ENCODE measurements at regions of chr20 and their contacts with region 1.

Region 1: DNA sequence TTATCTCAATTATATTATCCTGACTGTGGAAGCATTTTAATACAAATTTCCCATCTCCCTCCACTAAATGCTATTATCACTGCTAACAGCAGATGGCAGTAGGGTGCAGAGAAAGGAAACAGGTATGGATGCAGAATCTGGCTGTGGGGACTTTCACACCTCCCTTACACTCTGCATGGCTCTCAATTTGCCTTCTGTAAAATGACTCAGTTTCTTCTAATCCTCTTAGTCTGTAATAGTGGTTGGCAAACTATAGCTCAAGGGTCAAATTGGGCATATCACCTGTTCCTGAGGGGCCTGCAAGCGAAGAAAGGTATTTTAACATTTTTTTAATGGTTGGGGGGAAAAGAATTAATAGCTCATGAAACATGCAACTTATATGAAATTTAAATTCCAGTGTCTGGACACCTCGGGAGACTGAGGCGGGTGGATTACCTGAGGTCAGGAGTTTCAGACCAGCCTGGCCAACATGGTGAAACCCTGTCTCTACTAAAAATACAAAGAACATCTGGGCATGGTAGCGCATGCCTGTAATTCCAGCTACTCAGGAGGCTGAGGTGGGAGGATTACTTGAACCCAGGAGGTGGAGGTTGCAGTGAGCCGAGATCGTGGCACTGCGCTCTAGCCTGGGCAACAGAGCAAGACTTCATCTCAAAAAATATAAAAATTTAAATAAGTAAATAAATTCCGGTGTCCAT is 83.5 kb downstream of the ZMYND8 start:
- DNase-seq: peak; percentile 71
- ATAC-seq: peak; percentile 50
- H3K4me3 ChIP-seq: no peak overlapping the region
- H3K27ac ChIP-seq: peak overlapping the region; percentile 32; the same call in 1 of the 2 replicates
- H3K4me1 ChIP-seq: peaks cover 20% of the 10 kb centered on the region
- H3K27me3 ChIP-seq: no peaks in the 10 kb centered on the region
- CTCF ChIP-seq: peak; percentile 96
- POLR2A ChIP-seq: 0 out of 2 replicates have a peak, but pooled peaks have one; percentile 34
- RAD21 ChIP-seq: peak; percentile 96

Region 2: DNA sequence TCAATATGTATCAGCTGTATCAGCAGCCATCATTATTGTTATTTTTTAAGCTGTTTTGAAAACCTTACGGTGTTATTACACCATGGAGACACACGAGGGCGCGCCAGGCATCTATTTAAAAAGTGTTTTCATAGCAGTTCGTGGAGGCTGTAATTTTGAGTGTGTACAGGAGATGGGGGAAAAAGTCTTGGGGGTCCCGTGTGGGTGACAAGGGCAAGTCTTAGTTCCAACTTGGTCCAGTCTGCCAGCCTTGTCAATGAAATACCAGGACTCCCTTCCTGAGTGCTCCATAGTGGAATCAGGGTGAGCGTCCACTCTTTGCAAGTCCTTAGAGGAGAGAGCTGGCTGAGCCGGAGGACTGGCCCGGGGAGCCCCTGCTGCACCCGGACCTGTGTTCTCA is 520.3 kb before region 1 on chr20:
- CTCF ChIA-PET with region 1: no interaction called
- POLR2A ChIA-PET with region 1: no interaction called
- dilution Hi-C with region 1: no loop called
- in situ Hi-C with region 1: no loop called
- intact Hi-C with region 1: loop called (anchors 5 kb)
- DNase-seq: peak; percentile 62
- ATAC-seq: peak; percentile 85
- H3K4me3 ChIP-seq: no peak overlapping the region
- H3K27ac ChIP-seq: no peak overlapping the region
- H3K4me1 ChIP-seq: no peaks in the 10 kb centered on the region
- H3K27me3 ChIP-seq: no peaks in the 10 kb centered on the region
- CTCF ChIP-seq: peak; percentile 80
- POLR2A ChIP-seq: no peak
- RAD21 ChIP-seq: peak; percentile 75

Region 3: GRCh38 chr20:47196091-47197081 is 76.7 kb before region 1 on chr20:
- CTCF ChIA-PET with region 1: no interaction called
- POLR2A ChIA-PET with region 1: no interaction called
- dilution Hi-C with region 1: no loop called
- in situ Hi-C with region 1: no loop called
- intact Hi-C with region 1: loop called (anchors 1 kb)
- DNase-seq: peak; percentile 60
- ATAC-seq: peak; percentile 94
- H3K4me3 ChIP-seq: no peak overlapping the region
- H3K27ac ChIP-seq: no peak overlapping the region
- H3K4me1 ChIP-seq: peaks cover 3% of the 10 kb centered on the region; the same call in 1 of the 2 replicates
- H3K27me3 ChIP-seq: no peaks in the 10 kb centered on the region
- CTCF ChIP-seq: peak; percentile 96
- POLR2A ChIP-seq: peak; percentile 42; the same call in 1 of the 2 replicates
- RAD21 ChIP-seq: peak; percentile 96

Region 4: DNA sequence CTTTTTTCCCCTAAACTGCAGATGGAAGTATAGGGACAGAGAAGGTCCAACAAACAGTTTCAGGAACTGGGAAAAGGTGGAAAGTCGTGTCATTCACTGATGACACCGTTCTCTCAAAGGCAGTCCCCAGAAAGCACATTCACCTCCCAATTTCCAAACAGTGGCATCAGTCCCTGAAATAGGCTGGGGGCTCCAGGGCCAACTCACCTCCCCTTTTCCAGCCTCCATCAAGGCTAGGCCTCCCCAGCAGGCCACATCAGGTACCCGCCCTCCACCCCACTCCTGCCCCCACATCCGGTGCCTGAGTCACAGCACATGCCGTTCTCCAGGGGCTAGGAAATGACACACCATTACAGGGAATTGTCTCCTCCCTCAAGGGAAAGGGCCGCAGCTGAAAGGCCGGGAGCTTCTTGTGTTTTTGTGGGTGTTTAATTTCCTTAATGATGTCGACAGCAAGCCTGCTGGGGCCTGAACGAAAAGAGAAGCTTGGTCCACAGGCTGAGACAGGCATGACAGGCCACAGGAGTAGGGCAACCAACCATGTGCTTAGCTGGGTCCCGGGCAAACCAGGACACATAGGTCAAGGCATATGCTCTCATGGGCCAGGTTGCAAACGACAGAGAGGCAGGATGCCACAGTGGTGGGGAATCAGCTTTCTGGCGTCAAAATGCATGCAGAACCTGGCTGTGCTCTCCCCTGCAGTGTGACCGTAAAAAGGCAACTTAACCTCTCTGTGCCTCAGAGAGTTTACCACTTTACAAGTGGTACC is 44.3 kb after region 1 on chr20:
- CTCF ChIA-PET with region 1: interaction called, 4 read pairs
- POLR2A ChIA-PET with region 1: no interaction called
- dilution Hi-C with region 1: no loop called
- in situ Hi-C with region 1: no loop called
- intact Hi-C with region 1: loop called (anchors 5 kb)
- DNase-seq: peak; percentile 98
- ATAC-seq: peak; percentile 63
- H3K4me3 ChIP-seq: no peak overlapping the region
- H3K27ac ChIP-seq: peak overlapping the region; percentile 95
- H3K4me1 ChIP-seq: peaks cover 46% of the 10 kb centered on the region
- H3K27me3 ChIP-seq: no peaks in the 10 kb centered on the region
- CTCF ChIP-seq: no peak
- POLR2A ChIP-seq: peak; percentile 78; the same call in 1 of the 2 replicates
- RAD21 ChIP-seq: peak; percentile 14; the same call in 1 of the 2 replicates

Region 5: GRCh38 chr20:47356526-47357295 is 83.7 kb after region 1 on chr20 and contains the start of gene ZMYND8:
- CTCF ChIA-PET with region 1: interaction called, 6 read pairs
- POLR2A ChIA-PET with region 1: interaction called, 9 read pairs
- dilution Hi-C with region 1: no loop called
- in situ Hi-C with region 1: no loop called
- intact Hi-C with region 1: loop called (anchors 2 kb)
- DNase-seq: peak; percentile 92
- ATAC-seq: peak; percentile 58
- H3K4me3 ChIP-seq: no peak within 1 kb of the TSS
- H3K27ac ChIP-seq: peak within 1 kb of the TSS; percentile 98
- H3K4me1 ChIP-seq: peaks cover 76% of the 10 kb centered on the region
- H3K27me3 ChIP-seq: no peaks in the 10 kb centered on the region
- CTCF ChIP-seq: no peak
- POLR2A ChIP-seq: 0 out of 2 replicates have a peak, but pooled peaks have one; percentile 12
- RAD21 ChIP-seq: no peak
- total RNA-seq, gene ZMYND8: 23.6 and 24.0 TPM in 2 replicates

Region 6: GRCh38 chr20:47392015-47392720 is 119.1 kb after region 1 on chr20:
- CTCF ChIA-PET with region 1: no interaction called
- POLR2A ChIA-PET with region 1: interaction called, 4 read pairs
- dilution Hi-C with region 1: loop called (anchors 25 kb)
- in situ Hi-C with region 1: no loop called
- intact Hi-C with region 1: no loop called
- DNase-seq: peak; percentile 97
- ATAC-seq: peak; percentile 98
- H3K4me3 ChIP-seq: no peak overlapping the region
- H3K27ac ChIP-seq: peak overlapping the region; percentile 87
- H3K4me1 ChIP-seq: peaks cover 7% of the 10 kb centered on the region
- H3K27me3 ChIP-seq: no peaks in the 10 kb centered on the region
- CTCF ChIP-seq: no peak
- POLR2A ChIP-seq: no peak
- RAD21 ChIP-seq: no peak

Region 7: GRCh38 chr20:47479506-47479905 is 206.5 kb after region 1 on chr20:
- CTCF ChIA-PET with region 1: no interaction called
- POLR2A ChIA-PET with region 1: no interaction called
- dilution Hi-C with region 1: no loop called
- in situ Hi-C with region 1: no loop called
- intact Hi-C with region 1: no loop called
- DNase-seq: no peak
- ATAC-seq: no peak
- H3K4me3 ChIP-seq: no peak overlapping the region
- H3K27ac ChIP-seq: no peak overlapping the region
- H3K4me1 ChIP-seq: no peaks in the 10 kb centered on the region
- H3K27me3 ChIP-seq: peaks cover 4% of the 10 kb centered on the region
- CTCF ChIP-seq: no peak
- POLR2A ChIP-seq: no peak
- RAD21 ChIP-seq: no peak

Region 8: GRCh38 chr20:47501483-47502270 is 228.6 kb after region 1 on chr20 and contains the start of gene NCOA3:
- CTCF ChIA-PET with region 1: no interaction called
- POLR2A ChIA-PET with region 1: no interaction called
- dilution Hi-C with region 1: no loop called
- in situ Hi-C with region 1: no loop called
- intact Hi-C with region 1: loop called (anchors 1 kb)
- DNase-seq: peak; percentile 92
- ATAC-seq: peak; percentile 98
- H3K4me3 ChIP-seq: peak within 1 kb of the TSS; percentile 60
- H3K27ac ChIP-seq: peak within 1 kb of the TSS; percentile 85
- H3K4me1 ChIP-seq: peaks cover 6% of the 10 kb centered on the region
- H3K27me3 ChIP-seq: no peaks in the 10 kb centered on the region
- CTCF ChIP-seq: peak; percentile 38
- POLR2A ChIP-seq: peak; percentile 96
- RAD21 ChIP-seq: peak; percentile 41
- total RNA-seq, gene NCOA3: 27.2 and 29.0 TPM in 2 replicates

Measured in IMR-90 (cell line).